GM23248 (cell line): ENCODE measurements at regions of chr4 and their contacts with region 1.

Region 1: DNA sequence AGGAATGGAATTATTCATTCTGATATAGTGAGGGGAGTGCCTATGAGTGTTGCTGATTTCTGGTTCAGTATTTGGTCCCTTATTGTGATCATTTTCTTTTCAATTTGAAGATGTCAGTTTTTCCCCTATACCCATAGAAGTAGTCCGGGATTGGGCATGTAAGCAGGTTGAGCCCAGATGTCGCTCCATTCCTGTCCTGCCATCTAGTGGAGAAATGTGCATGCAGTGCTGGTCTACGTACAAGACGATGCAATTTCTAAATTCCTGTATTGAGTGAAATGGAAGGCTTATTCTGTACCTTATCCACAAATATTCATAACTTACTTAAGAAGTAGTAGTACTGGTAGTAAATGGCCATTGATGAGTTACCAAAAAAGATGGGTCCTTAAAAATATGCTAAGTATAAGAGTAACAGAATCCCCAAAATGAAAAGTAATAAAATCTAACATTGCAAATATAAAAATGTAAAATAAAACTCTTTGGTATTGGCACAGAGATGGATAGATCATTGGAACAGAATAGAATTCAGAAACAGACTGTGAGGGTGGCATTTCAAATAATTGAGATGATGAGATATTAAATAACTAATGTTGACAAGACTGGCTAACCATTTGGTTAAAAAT is 60.9 kb downstream of the UGT8 start:
- DNase-seq: peak; percentile 75
- H3K4me3 ChIP-seq: no peak overlapping the region
- H3K27ac ChIP-seq: no peak overlapping the region
- H3K4me1 ChIP-seq: no peaks in the 10 kb centered on the region
- H3K27me3 ChIP-seq: 0 out of 2 replicates have a peak, but pooled peaks cover 7% of the 10 kb centered on the region

Region 2: DNA sequence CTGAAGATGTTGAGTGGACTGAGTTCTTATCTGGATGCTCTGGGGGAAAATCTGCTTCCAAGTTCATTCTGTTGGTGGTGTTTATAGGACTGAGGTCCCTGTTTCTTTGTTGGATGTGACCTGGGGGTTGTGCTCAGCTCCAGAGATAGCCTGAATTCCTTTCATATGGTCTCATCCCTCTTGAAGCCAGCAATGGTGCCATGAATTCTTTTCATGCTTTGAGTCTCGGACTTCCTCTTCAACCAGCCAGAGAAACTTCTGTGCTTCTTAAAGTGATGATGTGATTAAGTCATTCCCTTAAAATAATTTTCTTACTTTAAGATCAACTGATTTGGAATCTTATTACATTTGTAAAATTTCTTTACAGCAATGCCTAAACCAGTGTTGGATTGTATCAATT is 294.6 kb before region 1 on chr4:
- in situ Hi-C with region 1: no loop called
- DNase-seq: peak; percentile 79
- H3K4me3 ChIP-seq: peak overlapping the region; percentile 62
- H3K27ac ChIP-seq: peak overlapping the region; percentile 46
- H3K4me1 ChIP-seq: peaks cover 37% of the 10 kb centered on the region
- H3K27me3 ChIP-seq: no peaks in the 10 kb centered on the region

Region 3: DNA sequence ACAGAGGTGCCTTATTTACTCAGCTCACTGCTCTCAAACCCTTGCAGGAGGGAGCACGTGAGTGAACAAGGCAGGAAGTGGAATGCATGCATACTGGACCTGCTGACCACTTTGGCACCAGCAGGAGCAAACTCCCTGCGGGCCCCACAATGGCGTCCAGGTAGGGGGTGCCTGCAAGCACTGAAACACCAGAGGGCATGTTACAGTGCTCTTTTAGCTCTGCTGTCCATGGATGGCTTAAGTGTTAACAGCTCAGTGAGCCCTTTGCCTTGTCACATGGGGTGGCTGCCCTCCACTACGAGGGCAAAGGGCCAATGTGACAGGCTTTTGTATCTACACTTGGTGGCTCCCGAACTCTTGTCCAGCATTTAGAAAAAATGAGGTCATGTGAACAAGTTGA is 260.4 kb before region 1 on chr4:
- in situ Hi-C with region 1: loop called (anchors 10 kb)
- DNase-seq: no peak
- H3K4me3 ChIP-seq: no peak overlapping the region
- H3K27ac ChIP-seq: no peak overlapping the region
- H3K4me1 ChIP-seq: no peaks in the 10 kb centered on the region
- H3K27me3 ChIP-seq: peaks cover 59% of the 10 kb centered on the region